Esophagus squamous epithelium (tissue), 5 donors: ENCODE measurements at regions of chr6 and their contacts with region 1.

Region 1: DNA sequence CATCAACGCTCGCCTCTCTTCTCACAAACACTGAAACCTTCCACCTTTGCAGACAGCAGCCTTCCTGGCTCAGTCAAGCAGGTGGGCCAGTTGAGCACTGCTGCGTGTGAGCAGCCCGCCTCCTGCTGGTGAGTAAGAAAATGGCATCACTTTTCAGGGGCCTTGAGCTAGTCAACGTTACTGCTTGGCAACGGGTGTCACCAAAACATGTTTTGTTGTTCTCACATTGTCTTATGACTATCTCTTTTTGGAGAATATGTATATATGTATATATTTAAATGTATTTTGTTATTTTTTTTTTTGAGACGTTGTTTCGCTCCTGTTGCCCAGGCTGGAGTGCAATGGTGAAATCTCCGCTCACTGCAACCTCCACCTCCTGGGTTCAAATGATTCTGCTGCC is 97.0 kb upstream of the AGPAT4 start:
- DNase-seq: no peak
- H3K4me3 ChIP-seq: no peak overlapping the region
- H3K27ac ChIP-seq: no peak overlapping the region
- H3K4me1 ChIP-seq: peaks cover 9 to 29% (median 16%) of the 10 kb centered on the region in 3 donors
- H3K27me3 ChIP-seq: no peaks in the 10 kb centered on the region
- CTCF ChIP-seq: peak; percentile 77 to 94 (median 88)
- POLR2A ChIP-seq: no peak

Region 2: GRCh38 chr6:160930547-160931377 is 440.1 kb before region 1 on chr6:
- intact Hi-C with region 1: loop called (anchors 5 kb)
- DNase-seq: no peak
- H3K4me3 ChIP-seq: peak overlapping the region; percentile 41 to 69 (median 54)
- H3K27ac ChIP-seq: peak overlapping the region in 2 of 4 donors; percentile 11 to 70
- H3K4me1 ChIP-seq: peaks cover 8 to 18% (median 10%) of the 10 kb centered on the region in 3 donors
- H3K27me3 ChIP-seq: peaks cover 0 to 17% (median 0%) of the 10 kb centered on the region in 4 donors
- CTCF ChIP-seq: peak; percentile 68 to 92 (median 89)
- POLR2A ChIP-seq: no peak

Region 3: DNA sequence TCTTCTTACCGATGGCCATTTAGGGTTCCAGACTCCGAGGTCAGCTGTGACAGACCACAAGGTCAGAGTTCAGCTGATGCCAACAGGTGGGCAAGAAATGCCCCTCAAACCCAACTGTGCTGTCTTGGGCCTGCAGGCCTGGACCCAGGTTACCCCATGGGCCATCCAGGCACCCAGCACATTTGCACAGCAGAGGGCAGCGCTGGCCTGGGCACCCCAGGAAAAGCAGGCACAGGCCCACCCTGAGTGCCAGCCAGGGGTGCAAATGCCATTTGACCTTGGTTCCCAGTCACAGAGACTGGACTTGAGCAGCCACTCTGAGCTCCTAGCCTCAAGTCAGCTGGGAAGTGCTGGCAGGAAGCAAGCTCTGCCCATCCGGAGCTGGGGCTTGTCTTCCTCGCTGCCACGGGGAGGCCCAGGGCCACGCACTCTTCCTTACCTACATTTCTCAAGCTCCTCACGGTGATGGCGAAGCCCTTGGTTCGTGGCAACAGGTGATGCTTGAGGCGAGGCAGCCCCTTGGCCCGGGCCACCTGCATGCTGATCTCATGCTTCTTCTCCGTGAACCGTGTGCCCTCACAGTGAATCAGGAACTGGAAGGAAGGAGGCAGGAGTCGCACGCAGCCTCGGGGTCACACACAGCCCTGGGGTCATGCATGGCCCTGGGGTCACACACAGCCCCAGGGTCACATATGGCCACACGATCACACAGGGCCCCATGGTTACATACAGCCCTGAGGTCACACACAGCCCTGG is 217.8 kb before region 1 on chr6:
- intact Hi-C with region 1: loop called (anchors 5 kb)
- DNase-seq: no peak
- H3K4me3 ChIP-seq: no peak overlapping the region
- H3K27ac ChIP-seq: no peak overlapping the region
- H3K4me1 ChIP-seq: no peaks in the 10 kb centered on the region
- H3K27me3 ChIP-seq: no peaks in the 10 kb centered on the region
- CTCF ChIP-seq: peak in 5 of 6 experiments; percentile 13 to 59 (median 27)
- POLR2A ChIP-seq: no peak

Region 4: DNA sequence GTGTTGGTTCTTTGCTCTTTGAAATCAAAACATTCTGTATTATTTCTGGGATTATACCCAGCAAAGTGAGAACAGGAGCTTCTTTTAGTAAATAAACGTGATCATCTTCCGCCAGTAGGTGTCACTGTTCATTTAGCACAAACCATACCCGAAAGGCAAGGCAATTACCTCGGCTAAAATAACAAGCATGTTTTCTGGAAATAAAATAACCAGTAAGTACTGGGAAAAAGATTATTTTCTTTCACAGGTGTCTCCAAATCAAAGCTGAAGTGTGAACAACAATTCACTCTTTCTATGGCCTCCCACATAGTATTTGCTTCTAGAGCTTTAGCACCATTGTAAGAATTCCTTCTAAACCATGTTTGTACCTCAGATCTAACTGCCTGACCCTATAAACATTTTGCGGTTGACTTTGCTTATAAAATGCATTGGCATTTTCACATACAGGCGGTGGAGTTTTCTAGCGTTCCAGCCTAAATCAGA is 47.6 kb after region 1 on chr6:
- intact Hi-C with region 1: no loop called
- DNase-seq: no peak
- H3K4me3 ChIP-seq: no peak overlapping the region
- H3K27ac ChIP-seq: no peak overlapping the region
- H3K4me1 ChIP-seq: peaks cover 3 to 48% (median 17%) of the 10 kb centered on the region in 3 donors
- H3K27me3 ChIP-seq: no peaks in the 10 kb centered on the region
- CTCF ChIP-seq: peak in 5 of 6 experiments; percentile 35 to 75 (median 65)
- POLR2A ChIP-seq: no peak